Naive thymus-derived CD4-positive, alpha-beta T cell (primary cell): ENCODE measurements at regions of chr15 and their contacts with region 1.

Region 1: DNA sequence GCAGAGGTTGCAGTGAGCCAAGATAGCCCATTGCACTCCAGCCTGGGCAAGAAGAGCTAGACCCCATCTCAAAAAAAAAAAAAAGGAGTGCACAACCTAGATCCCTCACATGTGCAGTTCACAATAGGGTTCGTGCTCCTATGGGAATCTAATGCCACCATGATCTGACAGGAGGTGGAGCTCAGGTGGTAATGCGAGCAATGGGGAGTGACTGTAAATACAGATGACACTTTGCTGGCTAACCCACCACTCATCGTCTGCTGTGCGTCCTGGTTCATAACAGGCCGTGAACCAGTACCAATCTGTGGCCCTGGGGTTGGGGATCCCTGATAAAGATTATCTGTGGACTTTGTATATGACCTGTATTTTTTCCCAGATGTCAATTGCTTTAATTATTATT is 16.7 kb downstream of the USP8 start:
- DNase-seq: no peak
- ATAC-seq: no peak
- H3K4me3 ChIP-seq: no peak overlapping the region
- H3K4me3 Mint-ChIP-seq: no peak overlapping the region
- H3K27ac ChIP-seq: no peak overlapping the region
- H3K27ac Mint-ChIP-seq: no peak overlapping the region
- H3K4me1 ChIP-seq: no peaks in the 10 kb centered on the region
- H3K4me1 Mint-ChIP-seq: peaks cover 11 to 24% (median 20%) of the 10 kb centered on the region in 7 donors
- H3K27me3 ChIP-seq: no peaks in the 10 kb centered on the region
- H3K27me3 Mint-ChIP-seq: no peaks in the 10 kb centered on the region

Region 2: DNA sequence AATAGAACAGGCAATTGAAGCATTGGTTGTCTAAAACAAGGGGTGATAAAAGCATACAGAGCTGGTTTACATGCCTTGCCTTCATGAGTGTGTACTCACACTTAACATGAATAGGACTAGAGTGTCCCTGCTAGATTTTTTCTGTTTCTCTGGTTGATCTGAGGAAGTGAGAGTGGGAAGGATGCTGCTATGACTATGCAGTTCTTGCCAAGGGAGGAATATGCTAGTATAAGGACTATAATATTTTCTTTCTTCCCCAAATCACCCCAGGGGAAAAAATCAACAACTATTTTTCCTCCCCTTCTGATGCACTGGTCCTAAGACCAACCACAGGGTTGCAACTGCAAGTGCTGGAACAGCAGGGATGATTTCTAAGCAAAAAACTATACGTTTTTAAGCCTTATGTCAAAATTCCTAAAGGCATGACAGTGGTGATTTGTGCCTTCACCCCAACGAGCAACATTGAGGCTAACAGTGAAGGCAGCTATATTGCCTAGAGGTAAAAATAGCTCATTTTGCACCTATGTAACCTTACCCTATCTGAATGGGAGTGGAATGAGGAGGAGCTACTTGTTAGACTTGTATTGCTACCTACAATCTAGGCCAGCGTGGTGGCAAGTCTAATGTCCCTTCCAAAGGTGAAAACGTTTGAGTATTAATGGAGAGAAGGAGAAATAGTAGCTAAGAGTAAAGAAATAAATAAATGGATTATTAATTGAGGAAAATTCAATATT is 50.2 kb before region 1 on chr15:
- CTCF ChIA-PET with region 1: no interaction called
- POLR2A ChIA-PET with region 1: no interaction called
- intact Hi-C with region 1: loop called in 1 of 2 experiments (anchors 2 kb)
- DNase-seq: no peak
- ATAC-seq: peak; percentile 66
- H3K4me3 ChIP-seq: no peak overlapping the region
- H3K4me3 Mint-ChIP-seq: no peak overlapping the region
- H3K27ac ChIP-seq: no peak overlapping the region
- H3K27ac Mint-ChIP-seq: no peak overlapping the region
- H3K4me1 ChIP-seq: no peaks in the 10 kb centered on the region
- H3K4me1 Mint-ChIP-seq: peaks cover 0 to 5% (median 0%) of the 10 kb centered on the region in 7 donors
- H3K27me3 ChIP-seq: no peaks in the 10 kb centered on the region
- H3K27me3 Mint-ChIP-seq: peaks cover 0 to 3% (median 0%) of the 10 kb centered on the region in 5 donors